Mammary epithelial cell (primary cell): ENCODE measurements at regions of chr3 and their contacts with region 1.

Region 1: GRCh38 chr3:48107227-48107626 is 81.0 kb downstream of the CDC25A start:
- DNase-seq: no peak
- H3K4me3 ChIP-seq: no peak overlapping the region
- H3K27ac ChIP-seq: no peak overlapping the region
- H3K4me1 ChIP-seq: no peaks in the 10 kb centered on the region
- H3K27me3 ChIP-seq: no peaks in the 10 kb centered on the region
- CTCF ChIP-seq: no peak

Region 2: DNA sequence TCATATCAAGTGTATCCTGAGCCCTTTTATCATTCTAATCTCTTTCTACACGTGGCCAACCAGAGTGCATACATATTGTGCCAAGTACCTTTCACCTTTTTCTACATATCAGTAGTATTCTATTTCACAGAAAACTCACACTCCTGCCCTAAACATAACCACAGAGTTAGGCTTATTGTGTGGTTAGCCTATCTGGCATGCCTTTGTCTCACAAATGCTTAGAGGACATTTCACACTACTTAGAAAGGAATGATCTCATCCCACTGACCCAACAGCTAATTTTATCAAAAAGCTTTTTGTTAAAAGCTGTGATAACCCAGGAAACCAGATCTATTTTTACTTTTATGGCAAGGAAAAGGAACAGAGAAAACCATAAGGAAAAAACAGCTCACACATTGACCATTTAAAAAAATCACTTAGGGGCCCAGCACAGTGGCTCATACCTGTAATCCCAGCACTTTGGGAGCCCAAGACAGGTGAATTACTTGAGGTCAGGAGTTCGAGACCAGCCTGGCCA is 73.2 kb before region 1 on chr3:
- CTCF ChIA-PET with region 1: no interaction called
- dilution Hi-C with region 1: loop called (anchors 5 kb)
- in situ Hi-C with region 1: no loop called
- intact Hi-C with region 1: no loop called
- DNase-seq: peak; percentile 87
- H3K4me3 ChIP-seq: no peak overlapping the region
- H3K27ac ChIP-seq: no peak overlapping the region
- H3K4me1 ChIP-seq: peaks cover 19% of the 10 kb centered on the region
- H3K27me3 ChIP-seq: no peaks in the 10 kb centered on the region
- CTCF ChIP-seq: no peak

Region 3: DNA sequence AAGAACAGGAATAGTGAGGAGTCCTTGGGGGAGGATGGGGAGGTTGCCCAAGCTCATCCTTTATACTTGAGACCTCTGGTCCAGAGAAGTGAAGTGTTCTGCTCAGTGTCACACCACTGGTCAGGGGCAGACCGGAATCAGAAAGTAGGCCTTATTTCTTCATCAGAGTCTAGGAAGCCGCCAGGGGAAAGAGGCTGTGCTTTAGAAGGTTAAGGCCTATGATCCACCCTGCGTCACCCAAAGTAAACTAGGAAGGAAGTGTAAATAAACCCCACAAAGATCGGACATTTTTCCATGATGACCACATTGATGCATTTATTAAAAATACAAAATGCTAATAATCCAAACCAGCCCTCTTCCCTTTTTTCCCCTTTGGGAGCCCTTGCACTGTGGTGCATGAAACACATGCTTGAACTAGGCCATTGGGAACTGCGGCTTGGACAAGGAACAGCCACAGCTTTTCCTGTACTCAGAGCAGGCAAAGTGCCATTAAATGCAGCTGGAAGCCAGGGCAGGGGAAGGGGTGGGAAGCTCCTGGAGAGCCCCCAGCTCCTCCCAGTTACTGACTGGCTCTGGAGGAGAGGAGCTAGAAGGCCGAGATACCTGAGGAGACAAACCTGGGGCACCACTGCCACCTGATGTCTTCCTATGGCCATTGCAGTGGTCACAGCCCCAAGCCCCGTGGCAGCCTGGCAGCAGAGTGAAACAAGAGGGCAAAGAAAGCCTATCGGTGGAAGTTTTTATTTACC is 44.0 kb after region 1 on chr3:
- CTCF ChIA-PET with region 1: no interaction called
- dilution Hi-C with region 1: no loop called
- in situ Hi-C with region 1: no loop called
- intact Hi-C with region 1: no loop called
- DNase-seq: peak; percentile 66
- H3K4me3 ChIP-seq: no peak overlapping the region
- H3K27ac ChIP-seq: no peak overlapping the region
- H3K4me1 ChIP-seq: peaks cover 12% of the 10 kb centered on the region
- H3K27me3 ChIP-seq: no peaks in the 10 kb centered on the region
- CTCF ChIP-seq: peak; percentile 90 to 96